Ascending aorta (tissue), 2 donors: ENCODE measurements at regions of chr5 and their contacts with region 1.

Region 1: GRCh38 chr5:33433303-33434240 is 7.2 kb upstream of the TARS1 start:
- DNase-seq: no peak
- H3K4me3 ChIP-seq: no peak overlapping the region
- H3K27ac ChIP-seq: no peak overlapping the region
- H3K4me1 ChIP-seq: no peaks in the 10 kb centered on the region
- H3K27me3 ChIP-seq: no peaks in the 10 kb centered on the region
- CTCF ChIP-seq: no peak

Region 2: DNA sequence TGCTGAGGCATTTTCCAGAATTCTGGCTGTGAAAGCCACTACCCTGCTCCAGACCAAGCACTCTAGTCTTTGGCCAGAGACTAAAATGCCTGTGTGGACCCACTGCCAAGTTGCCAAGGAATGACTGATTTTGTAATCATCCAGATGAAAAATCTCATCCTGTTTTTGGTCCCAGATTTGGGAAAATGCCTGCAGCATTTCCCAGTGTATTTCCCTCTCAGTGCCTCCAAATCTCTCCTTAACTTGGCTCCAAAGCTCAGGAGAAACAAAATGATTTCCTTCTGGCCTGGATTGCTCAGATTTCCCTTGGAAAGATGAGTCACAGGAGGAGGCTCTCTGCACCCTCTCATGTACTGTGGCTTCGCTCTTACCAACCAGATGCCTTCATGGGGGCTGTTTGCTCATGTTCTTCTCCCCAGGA is 328.0 kb before region 1 on chr5:
- intact Hi-C with region 1: no loop called
- DNase-seq: no peak
- H3K4me3 ChIP-seq: no peak overlapping the region
- H3K27ac ChIP-seq: peak overlapping the region; percentile 1 to 9
- H3K4me1 ChIP-seq: no peaks in the 10 kb centered on the region
- H3K27me3 ChIP-seq: no peaks in the 10 kb centered on the region
- CTCF ChIP-seq: no peak

Region 3: GRCh38 chr5:33143405-33144123 is 290.0 kb before region 1 on chr5:
- intact Hi-C with region 1: no loop called
- DNase-seq: no peak
- H3K4me3 ChIP-seq: no peak overlapping the region
- H3K27ac ChIP-seq: no peak overlapping the region
- H3K4me1 ChIP-seq: peaks cover 0 to 4% of the 10 kb centered on the region in 2 donors
- H3K27me3 ChIP-seq: no peaks in the 10 kb centered on the region
- CTCF ChIP-seq: no peak

Region 4: GRCh38 chr5:33755231-33755630 is 321.7 kb after region 1 on chr5:
- intact Hi-C with region 1: no loop called
- DNase-seq: no peak
- H3K4me3 ChIP-seq: no peak overlapping the region
- H3K27ac ChIP-seq: no peak overlapping the region
- H3K4me1 ChIP-seq: no peaks in the 10 kb centered on the region
- H3K27me3 ChIP-seq: no peaks in the 10 kb centered on the region
- CTCF ChIP-seq: no peak

Region 5: GRCh38 chr5:33969572-33970452 is 536.2 kb after region 1 on chr5:
- intact Hi-C with region 1: loop called (anchors 2 kb)
- DNase-seq: no peak
- H3K4me3 ChIP-seq: no peak overlapping the region
- H3K27ac ChIP-seq: no peak overlapping the region
- H3K4me1 ChIP-seq: no peaks in the 10 kb centered on the region
- H3K27me3 ChIP-seq: no peaks in the 10 kb centered on the region
- CTCF ChIP-seq: peak; percentile 45 to 60 (median 55)